ENCODE measurements at regions of chr7 and their contacts with region 1.

Region 1: GRCh38 chr7:148940702-148941597 is 56.9 kb upstream of the EZH2 start:
- DNase-seq: peak; percentile 73 to 79
- ATAC-seq: peak; percentile 93 to 98 (median 97)
- H3K4me3 ChIP-seq: peak overlapping the region; percentile 33 to 99 (median 68)
- H3K27ac ChIP-seq: peak overlapping the region; percentile 9 to 93 (median 78)
- H3K4me1 ChIP-seq: peaks cover 0 to 19% (median 9%) of the 10 kb centered on the region in 9 donors
- H3K27me3 ChIP-seq: no peaks in the 10 kb centered on the region
- CTCF ChIP-seq: no peak

Region 2: DNA sequence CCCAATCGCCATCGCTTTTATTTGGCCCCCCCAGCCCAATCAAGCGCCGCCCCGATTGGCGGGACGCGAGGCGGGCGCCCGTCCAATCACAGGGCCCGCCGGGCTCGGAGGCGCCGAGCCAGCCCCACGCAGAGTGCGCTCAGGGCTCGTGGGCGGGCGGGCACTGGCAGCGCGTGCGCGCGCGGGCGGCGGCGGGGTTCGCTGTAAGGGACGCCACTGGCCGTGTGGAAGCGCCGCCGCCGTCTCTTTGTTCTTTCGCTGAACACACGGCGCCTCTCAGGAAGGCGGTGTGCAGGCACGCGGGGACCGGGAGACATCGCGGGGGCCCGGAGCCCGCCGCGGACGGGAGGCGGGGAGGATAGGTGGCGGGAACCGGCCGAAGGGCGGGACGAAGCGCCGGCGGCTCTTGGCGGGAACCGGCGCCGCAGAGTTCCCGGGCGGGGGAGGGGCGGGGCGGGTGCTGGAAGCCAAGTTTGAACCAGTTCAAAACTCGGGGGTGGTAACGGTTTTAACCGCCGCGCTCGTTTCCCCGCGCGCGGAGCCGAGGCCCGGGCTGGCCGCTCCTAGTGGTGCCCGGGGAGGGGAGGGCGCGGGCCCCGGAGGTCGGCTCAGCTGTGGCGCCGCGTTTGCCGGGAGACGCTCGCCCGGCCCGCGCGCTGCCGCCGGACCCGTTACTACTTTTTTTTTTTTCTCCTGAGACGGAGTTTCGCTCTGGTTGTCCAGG is 56.5 kb before region 1 on chr7:
- intact Hi-C with region 1: loop called in 6 of 10 experiments (anchors 2 to 10 kb)
- DNase-seq: peak; percentile 93 to 94
- ATAC-seq: peak; percentile 99 to 100 (median 100)
- H3K4me3 ChIP-seq: peak overlapping the region; percentile 50 to 97 (median 94)
- H3K27ac ChIP-seq: peak overlapping the region; percentile 73 to 96 (median 93)
- H3K4me1 ChIP-seq: peaks cover 0 to 19% (median 8%) of the 10 kb centered on the region in 9 donors
- H3K27me3 ChIP-seq: no peaks in the 10 kb centered on the region
- CTCF ChIP-seq: peak in 1 of 9 donors; percentile 20

Region 3: GRCh38 chr7:148987010-148987750 is 46.2 kb after region 1 on chr7:
- intact Hi-C with region 1: loop called in 1 of 10 experiments (anchors 2 kb)
- DNase-seq: peak; percentile 70 to 82
- ATAC-seq: peak; percentile 90 to 95 (median 92)
- H3K4me3 ChIP-seq: peak overlapping the region; percentile 41 to 81 (median 66)
- H3K27ac ChIP-seq: peak overlapping the region; percentile 4 to 89 (median 74)
- H3K4me1 ChIP-seq: peaks cover 2 to 39% (median 32%) of the 10 kb centered on the region in 9 donors
- H3K27me3 ChIP-seq: peaks cover 0 to 5% (median 0%) of the 10 kb centered on the region in 7 donors
- CTCF ChIP-seq: no peak